Left colon (tissue), 2 donors: ENCODE measurements at regions of chr6 and their contacts with region 1.

Region 1: DNA sequence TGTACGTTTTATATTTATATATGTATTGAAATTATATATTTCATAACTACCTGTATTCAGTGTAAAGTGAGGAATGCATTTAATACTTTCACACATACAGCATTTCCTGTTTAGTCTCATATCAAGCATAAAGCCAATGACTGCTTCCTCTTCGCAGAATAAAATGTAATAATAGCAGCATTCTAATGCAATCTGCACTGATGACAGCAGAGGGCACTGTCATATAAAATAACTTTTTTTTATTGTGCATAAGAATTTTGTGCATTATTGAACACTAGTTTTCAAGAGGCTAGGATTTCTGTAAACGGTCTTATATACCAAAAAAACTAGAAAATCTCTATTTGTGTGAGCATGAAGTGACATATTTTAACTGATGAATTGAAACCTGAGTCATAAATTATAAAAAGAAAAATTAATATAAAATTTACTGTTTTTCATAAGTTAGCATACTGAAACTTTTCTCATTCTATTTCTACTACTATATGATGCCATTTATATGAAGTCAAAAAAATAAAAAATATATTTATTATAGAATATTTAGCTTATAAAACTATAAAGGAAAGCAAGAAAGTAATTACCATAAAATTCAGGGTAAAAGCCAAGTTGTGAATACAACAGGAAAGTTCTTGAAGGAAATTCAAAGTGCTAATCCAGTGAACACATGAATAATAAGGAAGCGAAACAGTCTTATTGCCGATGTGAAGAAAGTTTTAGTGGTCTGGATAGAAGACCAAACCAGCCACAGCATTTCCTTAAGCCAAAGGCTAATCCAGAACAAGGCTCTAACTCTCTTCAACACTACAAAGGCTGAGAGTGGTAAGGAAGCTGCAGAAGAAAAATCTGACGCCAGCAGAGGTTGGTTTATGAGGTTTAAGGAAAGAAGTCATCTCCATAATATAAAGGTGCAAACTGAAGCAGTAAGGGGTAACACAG is 36.3 kb downstream of the RNF146 start:
- DNase-seq: peak in 1 of 2 donors; percentile 61
- ATAC-seq: peak; percentile 88

Region 2: DNA sequence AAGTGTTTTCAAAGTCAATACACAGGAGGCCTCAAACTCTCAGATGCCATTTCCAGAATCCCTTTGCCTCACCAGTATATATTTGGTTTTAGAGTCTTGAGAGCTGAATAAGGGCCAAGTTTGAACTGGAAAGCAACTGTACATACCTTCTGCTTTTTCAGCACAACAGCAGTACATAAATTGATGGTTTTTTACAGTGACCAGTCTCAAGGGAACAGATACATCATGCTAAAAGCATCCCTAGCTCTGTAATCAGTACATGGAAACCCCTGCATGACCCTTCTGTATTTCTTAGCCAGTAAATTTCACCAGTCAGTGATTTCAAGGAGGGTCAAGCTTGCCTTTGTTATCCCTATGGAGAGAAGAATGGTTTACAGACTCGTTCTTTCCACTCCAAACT is 81.0 kb after region 1 on chr6:
- intact Hi-C with region 1: no loop called
- DNase-seq: no peak
- ATAC-seq: no peak

Region 3: GRCh38 chr6:127415096-127415495 is 112.1 kb after region 1 on chr6:
- intact Hi-C with region 1: loop called in 1 of 2 experiments (anchors 10 kb)
- DNase-seq: no peak
- ATAC-seq: no peak

Region 4: DNA sequence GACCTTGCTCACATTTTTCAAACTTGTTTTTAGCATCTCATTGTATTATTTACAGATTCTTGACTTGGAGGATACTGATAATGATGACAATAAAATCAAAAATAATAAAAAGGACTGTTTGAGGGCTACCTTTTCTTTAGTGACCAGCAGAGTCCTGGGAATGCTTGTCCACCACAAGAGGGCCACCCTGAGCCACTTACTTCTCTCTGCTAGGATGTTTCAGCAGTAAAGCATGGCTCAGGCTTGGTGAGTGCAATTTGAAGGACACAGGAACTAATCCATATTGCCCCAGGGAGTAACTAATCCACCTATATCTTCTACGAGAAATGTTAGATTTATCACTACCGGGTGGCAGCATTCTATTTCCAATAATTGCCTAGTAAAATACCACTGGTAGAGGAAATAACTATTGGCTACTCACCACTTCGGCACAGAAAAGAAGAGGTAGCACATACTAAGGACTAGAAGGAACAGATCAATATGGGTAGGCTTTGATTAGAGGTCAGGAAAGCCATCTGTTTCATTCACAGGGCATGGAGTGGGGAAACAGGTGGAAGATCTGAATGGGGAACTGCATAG is 162.0 kb after region 1 on chr6:
- intact Hi-C with region 1: loop called in 1 of 2 experiments (anchors 10 kb)
- DNase-seq: peak; percentile 64 to 68
- ATAC-seq: peak; percentile 80

Region 5: DNA sequence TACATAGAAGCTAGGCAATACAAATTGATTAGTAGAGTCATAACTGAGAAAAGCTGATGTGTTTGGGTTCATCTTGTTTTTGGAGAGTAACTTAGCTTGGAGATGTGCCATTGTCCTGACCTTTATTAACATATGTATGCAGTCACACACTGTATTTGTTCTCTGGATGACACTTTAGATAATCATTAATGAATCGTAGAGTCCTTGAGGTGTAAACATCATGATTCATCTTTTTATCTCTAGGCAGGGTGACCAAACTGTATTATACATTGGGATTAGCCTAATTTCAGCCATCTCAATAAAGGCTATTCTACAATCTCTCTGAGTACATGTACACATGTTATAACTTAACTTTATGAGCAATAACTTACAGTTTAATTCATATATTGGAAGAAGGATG is 219.7 kb after region 1 on chr6:
- intact Hi-C with region 1: no loop called
- DNase-seq: no peak
- ATAC-seq: no peak

Region 6: DNA sequence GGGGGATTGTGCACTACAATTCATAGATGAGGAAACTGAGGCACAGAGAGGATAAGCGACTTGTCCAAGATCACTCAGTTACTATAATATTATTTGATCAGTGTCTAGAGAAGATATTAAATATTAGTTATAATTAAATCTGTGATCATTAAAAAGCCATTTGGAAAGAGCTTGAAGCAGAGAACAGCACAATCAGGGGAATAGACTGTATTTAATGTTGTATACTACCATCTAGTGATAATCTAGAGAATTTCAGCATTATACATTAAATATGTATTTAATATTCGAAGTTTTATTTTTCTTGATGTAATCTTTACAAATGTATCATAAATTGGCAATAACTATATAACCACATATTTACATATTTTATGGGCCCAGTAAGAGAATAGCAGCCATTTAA is 236.3 kb after region 1 on chr6:
- intact Hi-C with region 1: loop called in 1 of 2 experiments (anchors 10 kb)
- DNase-seq: no peak
- ATAC-seq: no peak